ENCODE measurements at regions of chr1 and their contacts with region 1.

Region 1: DNA sequence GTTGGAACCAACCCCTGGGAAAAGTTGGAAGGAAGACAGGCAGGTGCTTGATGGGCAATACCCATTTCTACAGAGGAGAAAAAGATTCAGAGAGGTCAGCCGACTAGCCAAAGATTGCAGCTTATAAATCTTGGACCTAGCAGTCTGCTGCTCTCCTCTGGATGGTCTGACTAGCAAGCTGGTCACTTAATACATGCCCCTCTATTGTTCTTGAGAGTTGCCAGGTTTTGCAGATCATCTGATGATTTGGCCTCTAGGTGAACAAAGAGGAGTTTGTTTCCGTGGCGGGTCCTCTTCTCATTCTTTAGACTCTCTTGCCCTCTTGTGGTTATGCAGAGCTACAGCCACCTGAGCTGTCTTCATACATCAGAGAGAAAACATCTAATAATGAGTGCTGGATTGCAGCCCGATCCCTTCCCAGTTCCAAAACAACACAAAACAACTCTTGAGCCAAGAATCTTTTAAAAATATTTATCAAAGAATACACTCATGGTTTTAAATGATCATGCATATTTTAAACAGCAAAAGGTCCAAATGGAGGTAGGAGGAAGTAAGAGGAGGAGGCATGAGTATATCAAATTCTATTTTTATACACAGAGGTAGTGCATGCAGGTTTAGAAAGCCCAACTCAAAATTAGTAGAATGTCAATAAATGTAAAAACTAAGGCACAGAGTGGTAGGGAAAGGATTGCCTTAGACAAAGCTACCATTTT is 115.7 kb downstream of the SLC30A10 start:
- DNase-seq: peak; percentile 69
- H3K4me3 ChIP-seq: no peak overlapping the region
- H3K27ac ChIP-seq: no peak overlapping the region
- H3K4me1 ChIP-seq: no peaks in the 10 kb centered on the region
- H3K27me3 ChIP-seq: peaks cover 99% of the 10 kb centered on the region
- CTCF ChIP-seq: peak; percentile 73

Region 2: DNA sequence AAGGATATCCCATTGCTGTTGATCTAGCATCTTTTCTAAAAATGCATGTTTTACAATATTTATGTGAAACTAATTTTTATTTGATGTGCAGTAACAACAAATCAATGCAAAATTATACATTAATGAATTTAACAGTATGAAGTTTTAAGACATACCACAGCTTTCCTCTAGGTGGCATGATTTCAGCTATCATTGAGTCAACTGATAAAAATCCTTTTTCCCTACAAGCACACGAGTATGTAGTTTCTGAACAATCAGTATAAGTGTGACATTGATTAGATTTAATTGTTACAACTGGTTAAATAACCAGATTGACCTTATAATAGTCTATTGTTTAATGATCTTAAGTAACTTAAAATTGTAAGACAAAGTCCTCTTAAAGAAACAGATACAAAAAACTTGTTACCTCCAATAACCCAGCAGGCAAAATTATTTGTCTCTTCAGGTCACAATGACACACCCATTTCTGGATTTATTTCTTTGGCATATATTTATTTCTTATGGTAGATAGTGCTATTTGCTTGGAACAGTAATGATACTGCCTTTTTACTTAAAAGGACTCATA is 1473.3 kb before region 1 on chr1:
- CTCF ChIA-PET with region 1: no interaction called
- POLR2A ChIA-PET with region 1: no interaction called
- intact Hi-C with region 1: loop called (anchors 2 kb)
- DNase-seq: peak; percentile 47
- H3K4me3 ChIP-seq: no peak overlapping the region
- H3K27ac ChIP-seq: no peak overlapping the region
- H3K4me1 ChIP-seq: no peaks in the 10 kb centered on the region
- H3K27me3 ChIP-seq: no peaks in the 10 kb centered on the region
- CTCF ChIP-seq: peak; percentile 79

Region 3: DNA sequence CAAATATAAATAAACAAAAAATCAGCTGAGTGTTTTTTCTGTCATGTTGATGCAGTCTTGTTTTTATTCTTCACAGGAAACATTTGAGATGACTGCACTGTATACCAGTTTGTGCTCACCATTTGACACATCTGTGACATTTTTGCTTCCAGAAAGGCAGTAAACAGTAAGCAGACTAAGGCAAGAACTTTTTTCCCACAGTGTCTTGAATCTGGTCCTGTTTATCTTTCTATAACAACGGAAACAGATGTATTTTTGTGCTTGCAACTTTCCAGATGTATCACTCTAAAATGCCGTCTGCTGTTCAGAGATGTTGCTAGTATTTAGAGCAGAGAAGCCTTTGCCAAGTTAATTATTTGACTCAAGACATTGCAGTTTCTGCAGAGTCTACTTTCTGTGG is 305.2 kb before region 1 on chr1:
- CTCF ChIA-PET with region 1: no interaction called
- POLR2A ChIA-PET with region 1: no interaction called
- intact Hi-C with region 1: no loop called
- DNase-seq: no peak
- H3K4me3 ChIP-seq: no peak overlapping the region
- H3K27ac ChIP-seq: no peak overlapping the region
- H3K4me1 ChIP-seq: no peaks in the 10 kb centered on the region
- H3K27me3 ChIP-seq: peaks cover 47% of the 10 kb centered on the region
- CTCF ChIP-seq: no peak

Region 4: DNA sequence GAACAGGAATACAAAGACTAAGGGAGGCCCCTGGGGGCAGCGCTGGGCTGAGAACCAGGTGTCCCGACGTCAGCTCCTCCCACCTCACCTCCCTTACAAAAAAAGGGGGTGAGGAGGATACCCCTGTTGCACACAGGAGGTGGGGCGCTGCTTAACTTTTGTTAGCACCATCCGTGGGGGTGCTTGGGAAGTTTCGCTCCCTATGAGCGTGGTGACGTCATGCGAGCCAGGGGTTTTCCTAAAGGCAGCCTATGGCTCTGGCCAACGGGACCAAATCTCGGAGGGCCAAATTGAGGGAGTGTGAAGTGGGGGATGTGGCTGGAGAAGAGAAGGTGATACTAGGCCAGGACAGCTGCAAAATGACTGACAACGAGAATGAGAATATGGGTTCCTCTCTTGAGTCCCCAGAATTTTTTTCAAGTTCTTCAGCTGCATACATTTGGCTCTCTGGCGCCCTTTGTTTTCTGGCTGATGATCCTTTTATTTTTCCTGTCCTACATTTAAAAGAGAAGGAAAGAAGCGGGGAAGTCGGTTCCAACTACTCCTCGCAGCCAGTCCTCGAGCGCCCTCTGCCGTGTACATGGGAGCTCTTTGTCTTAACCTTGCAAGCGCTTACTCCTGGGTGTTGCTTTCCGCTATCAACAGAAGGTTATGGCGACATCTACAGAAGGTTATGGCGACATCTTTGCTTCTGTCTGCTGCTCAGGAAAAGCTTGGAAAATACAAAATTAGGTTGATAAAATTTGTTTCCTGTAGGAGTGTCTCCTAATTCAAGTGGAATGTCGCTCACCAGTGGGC is 151.8 kb before region 1 on chr1:
- CTCF ChIA-PET with region 1: no interaction called
- POLR2A ChIA-PET with region 1: no interaction called
- intact Hi-C with region 1: loop called (anchors 5 kb)
- DNase-seq: peak; percentile 91
- H3K4me3 ChIP-seq: no peak overlapping the region
- H3K27ac ChIP-seq: no peak overlapping the region
- H3K4me1 ChIP-seq: peaks cover 9% of the 10 kb centered on the region
- H3K27me3 ChIP-seq: peaks cover 35% of the 10 kb centered on the region
- CTCF ChIP-seq: peak; percentile 89

Region 5: GRCh38 chr1:220013497-220013896 is 200.8 kb after region 1 on chr1:
- CTCF ChIA-PET with region 1: no interaction called
- POLR2A ChIA-PET with region 1: no interaction called
- intact Hi-C with region 1: no loop called
- DNase-seq: no peak
- H3K4me3 ChIP-seq: no peak overlapping the region
- H3K27ac ChIP-seq: no peak overlapping the region
- H3K4me1 ChIP-seq: no peaks in the 10 kb centered on the region
- H3K27me3 ChIP-seq: no peaks in the 10 kb centered on the region
- CTCF ChIP-seq: no peak